ENCODE measurements at regions of chrX and their contacts with region 1.

Region 1: GRCh38 chrX:118468122-118468521 is 27.5 kb upstream of the DOCK11 start:
- DNase-seq: no peak
- H3K4me3 ChIP-seq: no peak overlapping the region
- H3K27ac ChIP-seq: no peak overlapping the region
- H3K4me1 ChIP-seq: no peaks in the 10 kb centered on the region
- H3K27me3 ChIP-seq: no peaks in the 10 kb centered on the region
- CTCF ChIP-seq: no peak
- EP300 ChIP-seq: no peak
- POLR2A ChIP-seq: no peak

Region 2: DNA sequence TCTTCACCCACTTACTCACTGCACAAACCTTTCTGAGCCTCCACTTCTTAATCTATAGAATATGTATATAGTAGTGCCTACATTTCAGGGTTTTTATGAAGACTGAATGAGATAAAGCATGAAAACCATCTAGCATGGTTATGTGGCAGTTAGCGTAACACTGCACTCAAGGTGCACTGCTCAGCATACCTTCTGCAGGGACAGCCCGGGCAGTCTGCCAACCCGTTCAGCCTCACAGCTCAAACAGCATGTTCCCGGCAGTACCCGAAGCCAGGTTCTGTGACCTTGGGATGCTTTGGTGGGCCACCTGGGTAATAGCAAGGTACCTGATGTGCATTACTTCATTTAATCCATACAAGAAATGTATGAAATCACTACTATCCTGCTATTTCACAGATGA is 108.9 kb after region 1 on chrX:
- in situ Hi-C with region 1: no loop called
- intact Hi-C with region 1: loop called (anchors 10 kb)
- DNase-seq: no peak
- H3K4me3 ChIP-seq: no peak overlapping the region
- H3K27ac ChIP-seq: no peak overlapping the region
- H3K4me1 ChIP-seq: no peaks in the 10 kb centered on the region
- H3K27me3 ChIP-seq: no peaks in the 10 kb centered on the region
- CTCF ChIP-seq: no peak
- EP300 ChIP-seq: no peak
- POLR2A ChIP-seq: no peak

Region 3: DNA sequence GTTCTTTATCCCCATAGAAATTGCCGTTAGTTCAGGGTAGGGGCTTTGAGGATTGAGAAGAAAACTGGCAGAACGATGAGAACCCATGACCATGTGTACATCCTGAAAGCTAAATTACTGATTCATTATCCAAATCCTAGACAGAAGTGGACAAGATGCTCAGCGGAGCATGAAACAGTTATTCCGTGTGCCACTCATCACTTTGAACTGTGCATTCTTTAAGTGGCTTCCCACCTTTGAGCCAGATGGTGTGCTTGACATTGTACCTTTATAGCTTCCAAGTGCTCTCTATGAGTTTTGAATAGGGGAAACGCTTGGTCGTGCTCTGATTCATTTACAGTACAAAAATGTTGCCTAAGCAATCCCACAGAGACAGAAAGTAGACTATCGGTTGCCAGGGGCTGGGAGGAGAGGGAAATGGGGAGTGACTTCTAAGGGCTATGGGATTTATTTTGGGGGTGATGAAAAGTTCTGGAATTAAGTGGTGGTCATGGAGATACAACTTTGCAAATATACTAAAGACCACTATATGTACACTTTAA is 127.5 kb after region 1 on chrX:
- in situ Hi-C with region 1: loop called in 1 of 4 experiments (anchors 25 kb)
- intact Hi-C with region 1: loop called (anchors 5 kb)
- DNase-seq: no peak
- H3K4me3 ChIP-seq: no peak overlapping the region
- H3K27ac ChIP-seq: peak overlapping the region in 1 of 4 donors; percentile 19
- H3K4me1 ChIP-seq: no peaks in the 10 kb centered on the region
- H3K27me3 ChIP-seq: no peaks in the 10 kb centered on the region
- CTCF ChIP-seq: no peak
- EP300 ChIP-seq: no peak
- POLR2A ChIP-seq: no peak

Region 4: GRCh38 chrX:120111611-120112010 is 1643.5 kb after region 1 on chrX:
- in situ Hi-C with region 1: no loop called
- intact Hi-C with region 1: no loop called
- DNase-seq: no peak
- H3K4me3 ChIP-seq: no peak overlapping the region
- H3K27ac ChIP-seq: no peak overlapping the region
- H3K4me1 ChIP-seq: no peaks in the 10 kb centered on the region
- H3K27me3 ChIP-seq: no peaks in the 10 kb centered on the region
- CTCF ChIP-seq: no peak
- EP300 ChIP-seq: no peak
- POLR2A ChIP-seq: no peak

Measured in transverse colon (tissue), 4 donors.